Upper lobe of right lung (tissue), 1 donor: ENCODE measurements at regions of chr11 and their contacts with region 1.

Region 1: DNA sequence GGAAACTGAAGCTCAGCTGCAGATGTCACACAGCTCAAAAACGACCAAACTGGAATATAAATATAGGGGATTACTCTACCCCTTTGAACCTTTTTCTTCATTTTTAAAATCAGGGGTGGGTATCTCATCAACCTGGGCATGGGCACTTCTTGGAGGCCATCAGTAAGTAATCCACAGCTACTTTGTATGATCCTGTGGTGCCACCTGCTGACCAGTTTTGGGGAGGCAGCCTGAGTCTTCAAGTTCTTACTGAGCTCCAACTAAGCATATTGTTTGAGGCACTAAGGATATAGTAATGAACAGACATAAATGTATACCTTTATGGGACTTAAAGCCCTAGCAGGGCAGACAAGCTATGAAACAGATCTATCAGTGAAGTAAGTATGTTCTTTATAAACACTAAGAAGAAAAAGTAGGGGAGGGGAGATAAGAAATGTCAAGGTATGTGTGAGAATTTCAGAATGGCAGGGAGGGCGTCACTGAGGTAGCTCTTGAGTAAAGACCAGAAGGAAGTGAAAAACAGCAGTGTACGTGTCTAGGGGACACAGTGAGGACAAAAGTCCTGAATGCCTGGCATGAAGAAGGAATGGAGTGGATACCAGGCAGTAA is 18.4 kb downstream of the TUB start:
- DNase-seq: no peak
- ATAC-seq: peak; percentile 67
- H3K4me3 ChIP-seq: no peak overlapping the region
- H3K27ac ChIP-seq: no peak overlapping the region
- H3K4me1 ChIP-seq: no peaks in the 10 kb centered on the region
- H3K27me3 ChIP-seq: no peaks in the 10 kb centered on the region
- CTCF ChIP-seq: peak; percentile 85

Region 2: DNA sequence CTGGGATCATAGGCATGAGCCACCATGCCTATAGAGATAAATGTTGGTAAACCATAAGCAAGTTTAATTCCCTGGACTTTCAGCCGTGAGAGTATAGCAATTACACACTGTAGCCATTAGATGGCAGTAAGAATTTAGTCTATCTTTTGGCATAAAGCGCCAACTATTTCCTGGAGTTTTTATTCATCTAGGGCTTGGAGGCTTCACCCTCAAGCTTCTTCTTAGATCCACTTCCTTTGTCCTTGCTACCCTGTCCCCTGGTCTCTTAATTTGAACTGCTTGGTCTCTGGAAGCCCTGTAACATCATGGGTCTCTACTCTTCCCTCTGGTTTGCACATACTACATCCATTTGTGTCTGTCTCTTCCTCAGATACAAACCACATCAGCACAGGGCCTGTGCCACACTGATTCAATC is 206.5 kb before region 1 on chr11:
- intact Hi-C with region 1: loop called (anchors 10 kb)
- DNase-seq: no peak
- ATAC-seq: peak; percentile 84
- H3K4me3 ChIP-seq: no peak overlapping the region
- H3K27ac ChIP-seq: no peak overlapping the region
- H3K4me1 ChIP-seq: peaks cover 4% of the 10 kb centered on the region
- H3K27me3 ChIP-seq: no peaks in the 10 kb centered on the region
- CTCF ChIP-seq: peak; percentile 80

Region 3: GRCh38 chr11:8006349-8006977 is 92.9 kb before region 1 on chr11:
- intact Hi-C with region 1: loop called (anchors 2 kb)
- DNase-seq: no peak
- ATAC-seq: peak; percentile 88
- H3K4me3 ChIP-seq: no peak overlapping the region
- H3K27ac ChIP-seq: no peak overlapping the region
- H3K4me1 ChIP-seq: no peaks in the 10 kb centered on the region
- H3K27me3 ChIP-seq: no peaks in the 10 kb centered on the region
- CTCF ChIP-seq: peak; percentile 76

Region 4: DNA sequence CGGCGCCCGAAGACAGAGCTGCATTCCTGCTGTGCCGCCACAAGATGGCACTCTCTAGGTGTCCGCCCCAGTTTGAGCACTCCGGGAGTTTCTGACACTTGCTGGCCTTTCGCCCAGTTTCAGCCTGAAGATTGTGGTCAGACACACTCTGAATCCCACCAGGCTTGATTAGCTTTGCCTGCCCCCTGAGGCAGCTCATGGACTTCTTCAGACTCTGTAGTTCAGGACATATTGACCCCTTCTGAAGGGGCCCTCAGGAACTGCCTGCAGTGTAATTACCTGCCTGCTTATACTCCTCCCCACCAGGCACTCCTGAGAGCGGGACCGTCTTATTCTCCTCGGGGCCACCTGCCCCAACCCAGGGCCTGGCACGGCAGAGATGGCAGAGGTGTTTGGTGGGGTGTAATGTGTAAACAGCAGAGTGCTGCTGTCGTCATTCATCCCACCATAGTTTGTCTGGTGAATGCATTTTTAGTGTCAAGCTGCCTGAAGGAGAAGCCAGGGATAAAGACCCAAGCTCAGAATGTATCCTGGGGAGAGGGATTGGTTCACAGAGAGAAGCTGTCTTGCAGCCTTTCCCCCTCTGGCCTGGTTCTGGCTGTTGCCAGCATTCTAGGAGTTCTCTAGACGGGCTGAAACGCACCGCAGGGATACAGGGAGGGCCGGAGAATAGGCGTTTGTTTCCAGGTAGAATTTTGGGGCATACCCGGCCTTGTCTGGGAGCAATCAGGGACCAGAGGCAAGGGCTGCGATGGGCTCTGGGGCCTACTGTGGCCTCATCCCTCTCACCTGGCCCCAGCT is 65.9 kb before region 1 on chr11:
- intact Hi-C with region 1: loop called (anchors 10 kb)
- DNase-seq: peak; percentile 79
- ATAC-seq: peak; percentile 83
- H3K4me3 ChIP-seq: no peak overlapping the region
- H3K27ac ChIP-seq: no peak overlapping the region
- H3K4me1 ChIP-seq: no peaks in the 10 kb centered on the region
- H3K27me3 ChIP-seq: no peaks in the 10 kb centered on the region
- CTCF ChIP-seq: peak; percentile 83

Region 5: GRCh38 chr11:8047382-8047781 is 52.0 kb before region 1 on chr11:
- intact Hi-C with region 1: no loop called
- DNase-seq: no peak
- ATAC-seq: no peak
- H3K4me3 ChIP-seq: no peak overlapping the region
- H3K27ac ChIP-seq: no peak overlapping the region
- H3K4me1 ChIP-seq: no peaks in the 10 kb centered on the region
- H3K27me3 ChIP-seq: no peaks in the 10 kb centered on the region
- CTCF ChIP-seq: no peak